Aorta (tissue), 5 donors: ENCODE measurements at regions of chr2 and their contacts with region 1.

Region 1: DNA sequence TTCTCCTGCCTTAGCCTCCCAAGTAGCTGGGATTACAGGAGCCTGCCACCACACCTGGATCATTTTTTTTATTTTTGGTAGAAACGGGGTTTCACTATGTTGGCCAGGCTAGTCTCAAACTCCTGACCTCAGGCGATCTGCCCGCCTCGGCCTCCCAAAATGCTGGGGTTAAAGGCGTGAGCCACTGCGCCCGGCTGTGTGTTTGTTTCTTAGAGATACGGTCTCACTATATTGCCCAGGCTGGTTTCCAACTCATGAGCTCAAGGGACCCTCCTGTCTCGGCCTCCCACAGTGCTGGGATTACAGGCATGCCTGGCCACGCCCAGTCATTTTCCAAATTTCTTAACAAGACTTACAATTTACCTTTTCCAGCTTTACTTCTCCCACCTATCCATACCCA is 940 bp upstream of the MRPL19 start:
- DNase-seq: no peak
- ATAC-seq: no peak
- H3K4me3 ChIP-seq: no peak overlapping the region
- H3K27ac ChIP-seq: no peak overlapping the region
- H3K4me1 ChIP-seq: no peaks in the 10 kb centered on the region
- H3K27me3 ChIP-seq: no peaks in the 10 kb centered on the region

Region 2: GRCh38 chr2:75679556-75679955 is 33.9 kb after region 1 on chr2:
- intact Hi-C with region 1: loop called in 1 of 2 experiments (anchors 2 kb)
- DNase-seq: no peak
- ATAC-seq: no peak
- H3K4me3 ChIP-seq: no peak overlapping the region
- H3K27ac ChIP-seq: no peak overlapping the region
- H3K4me1 ChIP-seq: no peaks in the 10 kb centered on the region
- H3K27me3 ChIP-seq: no peaks in the 10 kb centered on the region